Activated CD4-positive, alpha-beta T cell treated with anti-CD3 and anti-CD28 coated beads, Interleukin-2, amount 10 ng/mL, durations not matched to agents 7 days and 5 days (primary cell): ENCODE measurements at regions of chr17 and their contacts with region 1.

Region 1: GRCh38 chr17:58344047-58344790 is 7.8 kb downstream of the SUPT4H1 start:
- DNase-seq: peak; percentile 90
- H3K4me3 Mint-ChIP-seq: peak overlapping the region; percentile 93
- H3K27ac Mint-ChIP-seq: peak overlapping the region; percentile 84
- H3K4me1 Mint-ChIP-seq: peaks cover 79% of the 10 kb centered on the region
- H3K27me3 Mint-ChIP-seq: no peaks in the 10 kb centered on the region

Region 2: GRCh38 chr17:58303971-58304725 is 40.1 kb before region 1 on chr17:
- CTCF ChIA-PET with region 1: interaction called, 12 read pairs
- POLR2A ChIA-PET with region 1: no interaction called
- DNase-seq: peak; percentile 65
- H3K4me3 Mint-ChIP-seq: no peak overlapping the region
- H3K27ac Mint-ChIP-seq: no peak overlapping the region
- H3K4me1 Mint-ChIP-seq: no peaks in the 10 kb centered on the region
- H3K27me3 Mint-ChIP-seq: peaks cover 6% of the 10 kb centered on the region

Region 3: GRCh38 chr17:58329035-58329809 is 15.0 kb before region 1 on chr17:
- CTCF ChIA-PET with region 1: interaction called, 26 read pairs
- POLR2A ChIA-PET with region 1: interaction called, 244 read pairs
- DNase-seq: peak; percentile 86
- H3K4me3 Mint-ChIP-seq: peak overlapping the region; percentile 93
- H3K27ac Mint-ChIP-seq: peak overlapping the region; percentile 99
- H3K4me1 Mint-ChIP-seq: peaks cover 36% of the 10 kb centered on the region
- H3K27me3 Mint-ChIP-seq: peaks cover 4% of the 10 kb centered on the region

Region 4: GRCh38 chr17:58417300-58418092 is 73.3 kb after region 1 on chr17 and contains the start of gene RNF43:
- CTCF ChIA-PET with region 1: interaction called, 13 read pairs
- POLR2A ChIA-PET with region 1: interaction called, 12 read pairs
- DNase-seq: peak; percentile 91
- H3K4me3 Mint-ChIP-seq: no peak within 1 kb of the TSS
- H3K27ac Mint-ChIP-seq: peak within 1 kb of the TSS; percentile 50
- H3K4me1 Mint-ChIP-seq: peaks cover 26% of the 10 kb centered on the region
- H3K27me3 Mint-ChIP-seq: no peaks in the 10 kb centered on the region
- total RNA-seq, gene RNF43: 0.07 to 0.12 TPM

Region 5: GRCh38 chr17:58492238-58493121 is 148.3 kb after region 1 on chr17:
- CTCF ChIA-PET with region 1: no interaction called
- POLR2A ChIA-PET with region 1: no interaction called
- DNase-seq: no peak
- H3K4me3 Mint-ChIP-seq: no peak overlapping the region
- H3K27ac Mint-ChIP-seq: no peak overlapping the region
- H3K4me1 Mint-ChIP-seq: peaks cover 16% of the 10 kb centered on the region
- H3K27me3 Mint-ChIP-seq: no peaks in the 10 kb centered on the region